B cell (primary cell): ENCODE measurements at regions of chr19 and their contacts with region 1.

Region 1: GRCh38 chr19:58439576-58440554 is at the start of gene ZNF132:
- DNase-seq: peak; percentile 99
- ATAC-seq: peak; percentile 98
- H3K4me3 ChIP-seq: peak within 1 kb of the TSS; percentile 60 to 97 (median 74)
- H3K4me3 Mint-ChIP-seq: peak within 1 kb of the TSS; percentile 99
- H3K27ac ChIP-seq: peak within 1 kb of the TSS; percentile 78 to 97
- H3K27ac Mint-ChIP-seq: peak within 1 kb of the TSS; percentile 98
- H3K4me1 ChIP-seq: peaks cover 14 to 21% of the 10 kb centered on the region in 2 donors
- H3K4me1 Mint-ChIP-seq: peaks cover 23% of the 10 kb centered on the region
- H3K27me3 ChIP-seq: no peaks in the 10 kb centered on the region
- H3K27me3 Mint-ChIP-seq: peaks cover 9% of the 10 kb centered on the region
- CTCF ChIP-seq: no peak
- total RNA-seq, gene ZNF132: 14.7 and 15.2 TPM in 2 replicates

Region 2: DNA sequence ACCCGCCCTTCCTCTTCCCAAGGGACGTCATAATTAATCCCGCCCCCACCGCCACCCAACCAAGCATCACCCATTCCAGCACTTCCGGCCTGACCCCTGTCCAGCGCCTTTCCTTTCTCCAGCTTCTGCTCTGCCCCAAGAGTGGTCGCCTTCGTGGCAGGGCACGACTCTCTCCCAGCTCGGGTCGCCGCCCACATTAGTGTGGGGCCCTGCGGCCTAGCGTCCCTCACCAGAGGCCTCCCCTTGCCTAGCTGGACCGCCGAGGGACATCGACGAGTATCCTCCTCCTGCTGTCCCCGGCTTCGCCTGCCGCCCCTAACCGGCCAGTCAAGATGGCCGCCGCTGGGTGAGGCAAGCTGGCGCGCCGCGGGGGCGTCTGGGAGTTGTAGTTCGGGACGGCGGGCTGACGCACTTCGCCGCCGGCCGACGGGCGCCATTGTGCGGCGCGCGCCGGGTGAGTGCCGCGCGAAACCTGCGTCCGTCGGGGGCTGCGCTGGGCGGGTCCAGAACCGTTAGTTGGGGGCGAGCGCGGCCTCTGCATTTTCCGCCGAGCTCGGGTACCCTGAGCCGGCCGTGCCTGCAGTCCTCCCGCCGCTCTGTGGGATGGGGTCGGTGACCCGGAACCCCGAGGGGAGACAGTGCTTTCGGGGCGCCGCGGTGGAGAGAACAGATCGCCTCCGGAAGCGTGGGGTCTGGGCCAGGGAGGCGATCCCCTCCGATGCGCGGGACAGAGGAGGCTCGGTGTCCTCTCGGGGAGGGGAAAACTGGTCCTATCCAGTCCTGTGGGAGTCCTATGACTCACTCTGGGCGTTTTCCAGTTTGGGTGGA is 256.7 kb before region 1 on chr19 and contains the start of gene ZNF274:
- CTCF ChIA-PET with region 1: no interaction called
- POLR2A ChIA-PET with region 1: interaction called, 5 read pairs
- intact Hi-C with region 1: loop called (anchors 1 kb)
- DNase-seq: peak; percentile 97
- ATAC-seq: peak; percentile 85
- H3K4me3 ChIP-seq: peak within 1 kb of the TSS; percentile 78 to 100 (median 88)
- H3K4me3 Mint-ChIP-seq: peak within 1 kb of the TSS; percentile 96
- H3K27ac ChIP-seq: peak within 1 kb of the TSS; percentile 99 to 100
- H3K27ac Mint-ChIP-seq: peak within 1 kb of the TSS; percentile 100
- H3K4me1 ChIP-seq: peaks cover 12 to 20% of the 10 kb centered on the region in 2 donors
- H3K4me1 Mint-ChIP-seq: peaks cover 26% of the 10 kb centered on the region
- H3K27me3 ChIP-seq: no peaks in the 10 kb centered on the region
- H3K27me3 Mint-ChIP-seq: no peaks in the 10 kb centered on the region
- CTCF ChIP-seq: no peak
- total RNA-seq, gene ZNF274: 83.7 and 85.4 TPM in 2 replicates

Region 3: GRCh38 chr19:58252102-58252685 is 187.7 kb before region 1 on chr19:
- CTCF ChIA-PET with region 1: no interaction called
- POLR2A ChIA-PET with region 1: no interaction called
- intact Hi-C with region 1: no loop called
- DNase-seq: no peak
- ATAC-seq: no peak
- H3K4me3 ChIP-seq: no peak overlapping the region
- H3K4me3 Mint-ChIP-seq: no peak overlapping the region
- H3K27ac ChIP-seq: no peak overlapping the region
- H3K27ac Mint-ChIP-seq: no peak overlapping the region
- H3K4me1 ChIP-seq: no peaks in the 10 kb centered on the region
- H3K4me1 Mint-ChIP-seq: no peaks in the 10 kb centered on the region
- H3K27me3 ChIP-seq: no peaks in the 10 kb centered on the region
- H3K27me3 Mint-ChIP-seq: no peaks in the 10 kb centered on the region
- CTCF ChIP-seq: no peak

Region 4: GRCh38 chr19:58346961-58347931 is 92.6 kb before region 1 on chr19:
- CTCF ChIA-PET with region 1: no interaction called
- POLR2A ChIA-PET with region 1: no interaction called
- intact Hi-C with region 1: no loop called
- DNase-seq: peak; percentile 91
- ATAC-seq: peak; percentile 96
- H3K4me3 ChIP-seq: peak overlapping the region; percentile 47 to 75 (median 62)
- H3K4me3 Mint-ChIP-seq: peak overlapping the region; percentile 96
- H3K27ac ChIP-seq: peak overlapping the region; percentile 59 to 77
- H3K27ac Mint-ChIP-seq: peak overlapping the region; percentile 89
- H3K4me1 ChIP-seq: peaks cover 16 to 28% of the 10 kb centered on the region in 2 donors
- H3K4me1 Mint-ChIP-seq: peaks cover 30% of the 10 kb centered on the region
- H3K27me3 ChIP-seq: no peaks in the 10 kb centered on the region
- H3K27me3 Mint-ChIP-seq: no peaks in the 10 kb centered on the region
- CTCF ChIP-seq: no peak

Region 5: GRCh38 chr19:58380722-58381466 is 59.0 kb before region 1 on chr19 and contains the start of gene ZNF837:
- CTCF ChIA-PET with region 1: no interaction called
- POLR2A ChIA-PET with region 1: interaction called, 5 read pairs
- intact Hi-C with region 1: loop called (anchors 1 kb)
- DNase-seq: peak; percentile 100
- ATAC-seq: peak; percentile 86
- H3K4me3 ChIP-seq: peak within 1 kb of the TSS; percentile 22 to 78 (median 71)
- H3K4me3 Mint-ChIP-seq: peak within 1 kb of the TSS; percentile 92
- H3K27ac ChIP-seq: peak within 1 kb of the TSS; percentile 89 to 97
- H3K27ac Mint-ChIP-seq: peak within 1 kb of the TSS; percentile 95
- H3K4me1 ChIP-seq: peaks cover 27 to 35% of the 10 kb centered on the region in 2 donors
- H3K4me1 Mint-ChIP-seq: peaks cover 32% of the 10 kb centered on the region
- H3K27me3 ChIP-seq: no peaks in the 10 kb centered on the region
- H3K27me3 Mint-ChIP-seq: no peaks in the 10 kb centered on the region
- CTCF ChIP-seq: no peak
- total RNA-seq, gene ZNF837: 3.1 and 4.2 TPM in 2 replicates

Region 6: GRCh38 chr19:58400916-58401839 is 38.7 kb before region 1 on chr19:
- CTCF ChIA-PET with region 1: no interaction called
- POLR2A ChIA-PET with region 1: no interaction called
- intact Hi-C with region 1: loop called (anchors 1 kb)
- DNase-seq: peak; percentile 100
- ATAC-seq: peak; percentile 97
- H3K4me3 ChIP-seq: peak overlapping the region; percentile 32 to 69 (median 64)
- H3K4me3 Mint-ChIP-seq: peak overlapping the region; percentile 89
- H3K27ac ChIP-seq: peak overlapping the region; percentile 62 to 87
- H3K27ac Mint-ChIP-seq: peak overlapping the region; percentile 91
- H3K4me1 ChIP-seq: peaks cover 7 to 15% of the 10 kb centered on the region in 2 donors
- H3K4me1 Mint-ChIP-seq: peaks cover 7% of the 10 kb centered on the region
- H3K27me3 ChIP-seq: peaks cover 0 to 19% (median 7%) of the 10 kb centered on the region in 4 experiments
- H3K27me3 Mint-ChIP-seq: peaks cover 3% of the 10 kb centered on the region
- CTCF ChIP-seq: no peak

Region 7: DNA sequence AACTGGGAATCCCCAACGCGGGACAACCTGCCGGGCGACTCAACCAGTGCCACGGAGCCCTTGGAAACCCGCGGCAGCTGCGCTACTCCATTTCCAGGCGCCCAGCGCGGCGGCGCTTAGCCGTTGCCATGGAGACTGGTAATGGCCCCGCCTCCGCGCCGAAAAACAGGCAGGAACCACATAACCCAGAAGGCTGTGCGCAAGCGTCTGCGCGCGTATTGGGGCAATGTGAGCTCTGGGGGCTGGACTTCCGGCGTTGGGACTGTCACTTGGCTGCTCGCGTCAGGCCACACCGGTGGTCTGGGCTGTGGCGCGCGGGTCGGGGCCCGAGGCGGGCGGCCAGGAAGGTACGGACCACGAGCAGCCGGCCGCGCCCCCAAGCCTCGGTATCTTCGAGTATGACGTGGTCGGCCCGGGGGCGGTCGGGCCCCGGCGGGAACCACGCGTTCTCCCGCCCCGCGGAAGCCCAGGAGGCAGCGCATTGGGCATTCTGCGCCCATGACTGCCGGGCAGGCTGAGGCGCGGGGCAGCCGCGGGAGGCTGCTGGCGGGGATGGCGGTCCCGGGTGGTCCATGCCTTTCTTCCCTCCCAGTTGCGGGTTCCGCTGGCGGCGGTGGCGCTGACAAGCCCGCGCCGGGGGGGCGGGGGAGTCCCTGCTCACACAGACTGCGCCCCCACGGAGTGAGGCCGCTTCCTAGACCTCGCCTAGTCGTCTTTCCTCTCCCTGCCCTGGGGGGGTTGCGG is 11.7 kb after region 1 on chr19 and contains the start of gene ZNF324B:
- CTCF ChIA-PET with region 1: no interaction called
- POLR2A ChIA-PET with region 1: interaction called, 10 read pairs
- intact Hi-C with region 1: loop called (anchors 1 kb)
- DNase-seq: peak; percentile 97
- ATAC-seq: peak; percentile 97
- H3K4me3 ChIP-seq: peak within 1 kb of the TSS; percentile 55 to 81 (median 73)
- H3K4me3 Mint-ChIP-seq: peak within 1 kb of the TSS; percentile 93
- H3K27ac ChIP-seq: peak within 1 kb of the TSS in 1 of 2 donors; percentile 66
- H3K27ac Mint-ChIP-seq: peak within 1 kb of the TSS; percentile 85
- H3K4me1 ChIP-seq: peaks cover 5 to 12% of the 10 kb centered on the region in 2 donors
- H3K4me1 Mint-ChIP-seq: peaks cover 20% of the 10 kb centered on the region
- H3K27me3 ChIP-seq: peaks cover 0 to 24% (median 2%) of the 10 kb centered on the region in 4 experiments
- H3K27me3 Mint-ChIP-seq: peaks cover 13% of the 10 kb centered on the region
- CTCF ChIP-seq: no peak
- total RNA-seq, gene ZNF324B: 15.0 and 17.4 TPM in 2 replicates

Region 8: DNA sequence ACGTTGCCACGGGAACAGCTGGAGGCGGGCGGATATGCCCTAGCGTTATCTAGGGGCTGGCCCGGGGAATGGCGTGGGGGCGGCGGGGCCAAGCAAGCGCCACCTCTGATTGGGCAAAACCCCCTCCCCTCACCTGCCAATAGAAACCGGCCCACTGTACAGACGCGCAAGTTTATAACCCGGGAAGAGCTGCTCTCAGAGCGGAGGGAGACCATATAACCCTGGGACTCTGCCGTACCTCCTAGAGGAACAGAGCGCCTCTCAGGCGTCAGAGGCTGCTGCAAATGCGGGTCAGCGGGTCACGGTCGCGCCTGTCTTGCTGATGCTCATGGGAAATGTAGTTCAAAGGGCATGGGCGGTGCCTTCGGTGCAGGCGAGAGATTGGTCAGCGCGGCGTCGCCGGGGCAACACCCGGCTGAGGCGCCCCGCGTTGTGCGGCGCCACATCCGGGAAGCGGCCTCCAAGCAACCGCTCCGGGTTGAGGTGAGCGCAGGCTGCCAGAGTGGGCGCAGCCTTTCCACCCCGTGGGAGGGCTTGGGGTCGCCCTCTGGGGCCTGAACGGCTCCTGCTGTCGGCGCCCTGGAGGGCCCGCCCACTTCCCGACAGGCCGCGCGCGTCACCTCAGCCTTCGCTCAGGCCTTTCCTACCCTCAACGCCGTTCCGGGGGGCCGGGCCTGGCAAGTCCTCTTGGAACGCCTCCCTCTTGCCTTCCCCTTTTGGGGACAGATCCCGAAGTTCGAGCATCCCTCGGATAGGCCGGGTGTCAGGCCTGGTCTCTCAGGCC is 36.0 kb after region 1 on chr19 and contains the start of gene ZNF446:
- CTCF ChIA-PET with region 1: no interaction called
- POLR2A ChIA-PET with region 1: interaction called, 4 read pairs
- intact Hi-C with region 1: loop called (anchors 1 kb)
- DNase-seq: peak; percentile 97
- ATAC-seq: peak; percentile 89
- H3K4me3 ChIP-seq: peak within 1 kb of the TSS; percentile 39 to 85 (median 70)
- H3K4me3 Mint-ChIP-seq: peak within 1 kb of the TSS; percentile 98
- H3K27ac ChIP-seq: peak within 1 kb of the TSS; percentile 82 to 89
- H3K27ac Mint-ChIP-seq: peak within 1 kb of the TSS; percentile 98
- H3K4me1 ChIP-seq: peaks cover 14 to 18% of the 10 kb centered on the region in 2 donors
- H3K4me1 Mint-ChIP-seq: peaks cover 20% of the 10 kb centered on the region
- H3K27me3 ChIP-seq: no peaks in the 10 kb centered on the region
- H3K27me3 Mint-ChIP-seq: no peaks in the 10 kb centered on the region
- CTCF ChIP-seq: no peak
- total RNA-seq, gene ZNF446: 15.0 and 18.5 TPM in 2 replicates

Region 9: DNA sequence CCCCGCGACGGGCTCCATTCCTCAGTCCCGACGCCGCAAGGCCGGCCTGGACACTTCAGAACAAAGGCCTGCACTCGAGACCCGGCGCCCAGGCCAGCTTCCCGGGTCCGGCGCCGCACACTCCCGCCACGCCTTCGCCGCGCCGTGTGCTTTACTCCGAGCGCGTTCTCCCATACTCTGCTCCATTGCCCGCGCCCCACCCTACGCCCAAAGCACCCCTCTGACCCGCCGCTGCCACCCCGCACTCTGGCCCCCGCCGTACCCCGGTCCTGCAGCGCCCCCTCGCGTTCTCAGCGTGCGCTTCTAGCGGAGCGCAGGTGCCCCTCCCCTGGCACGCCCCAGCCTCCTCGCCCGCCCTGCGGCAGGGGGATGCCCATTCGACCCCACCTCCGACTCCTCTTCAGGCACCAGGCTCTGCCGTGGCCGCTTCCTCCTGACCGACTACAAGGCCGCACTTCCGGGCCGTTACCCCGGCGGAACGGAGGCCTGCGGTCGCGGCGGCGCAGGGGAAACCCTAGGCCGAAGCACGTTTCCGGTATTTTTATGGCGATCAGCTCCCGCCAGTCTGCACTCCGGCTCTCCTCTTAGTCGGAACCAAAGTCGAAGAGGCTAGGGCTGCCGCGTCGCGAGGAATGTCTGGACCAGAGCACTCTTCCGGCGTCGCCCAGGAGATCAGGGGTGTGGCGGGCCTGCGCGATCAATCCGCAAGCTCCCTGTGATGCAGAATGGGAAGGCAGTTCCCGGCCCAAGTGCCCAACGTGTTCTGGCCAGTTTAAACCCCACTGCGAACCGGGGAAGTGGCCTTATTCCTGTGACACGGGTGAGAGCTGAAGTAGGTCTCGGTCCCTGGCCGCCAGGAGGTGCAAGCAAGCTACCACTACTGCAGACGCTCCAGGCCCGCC is 79.7 kb after region 1 on chr19 and contains the start of gene ZBTB45:
- CTCF ChIA-PET with region 1: no interaction called
- POLR2A ChIA-PET with region 1: interaction called, 4 read pairs
- intact Hi-C with region 1: loop called (anchors 1 kb)
- DNase-seq: peak; percentile 96
- ATAC-seq: peak; percentile 84
- H3K4me3 ChIP-seq: peak within 1 kb of the TSS; percentile 64 to 78 (median 71)
- H3K4me3 Mint-ChIP-seq: peak within 1 kb of the TSS; percentile 98
- H3K27ac ChIP-seq: peak within 1 kb of the TSS; percentile 76 to 96
- H3K27ac Mint-ChIP-seq: peak within 1 kb of the TSS; percentile 99
- H3K4me1 ChIP-seq: peaks cover 18 to 28% of the 10 kb centered on the region in 2 donors
- H3K4me1 Mint-ChIP-seq: peaks cover 42% of the 10 kb centered on the region
- H3K27me3 ChIP-seq: no peaks in the 10 kb centered on the region
- H3K27me3 Mint-ChIP-seq: no peaks in the 10 kb centered on the region
- CTCF ChIP-seq: peak; percentile 72
- total RNA-seq, gene ZBTB45: 20.9 and 28.4 TPM in 2 replicates